ENCODE measurements at regions of chr13 and their contacts with region 1.

Region 1: GRCh38 chr13:75870397-75870903 is 234.3 kb downstream of the LMO7 start:
- DNase-seq: no peak
- H3K4me3 ChIP-seq: peak overlapping the region; percentile 33 to 37 (median 35)
- H3K27ac ChIP-seq: peak overlapping the region in 1 of 4 donors; percentile 17
- H3K4me1 ChIP-seq: peaks cover 0 to 11% (median 9%) of the 10 kb centered on the region in 4 donors
- H3K27me3 ChIP-seq: no peaks in the 10 kb centered on the region
- CTCF ChIP-seq: peak; percentile 74 to 84 (median 83)
- EP300 ChIP-seq: no peak
- POLR2A ChIP-seq: no peak

Region 2: GRCh38 chr13:76473552-76474134 is 603.2 kb after region 1 on chr13:
- intact Hi-C with region 1: loop called (anchors 2 kb)
- DNase-seq: no peak
- H3K4me3 ChIP-seq: no peak overlapping the region
- H3K27ac ChIP-seq: no peak overlapping the region
- H3K4me1 ChIP-seq: peaks cover 4 to 20% (median 15%) of the 10 kb centered on the region in 4 donors
- H3K27me3 ChIP-seq: no peaks in the 10 kb centered on the region
- CTCF ChIP-seq: peak; percentile 81 to 90 (median 84)
- EP300 ChIP-seq: no peak
- POLR2A ChIP-seq: no peak

Region 3: GRCh38 chr13:76886292-76887075 is 1016.0 kb after region 1 on chr13 and contains the start of gene KCTD12:
- intact Hi-C with region 1: loop called (anchors 5 kb)
- DNase-seq: peak; percentile 98
- H3K4me3 ChIP-seq: peak within 1 kb of the TSS; percentile 83 to 95 (median 89)
- H3K27ac ChIP-seq: peak within 1 kb of the TSS; percentile 90 to 97 (median 94)
- H3K4me1 ChIP-seq: peaks cover 5 to 47% (median 41%) of the 10 kb centered on the region in 4 donors
- H3K27me3 ChIP-seq: no peaks in the 10 kb centered on the region
- CTCF ChIP-seq: peak; percentile 33 to 45 (median 41)
- EP300 ChIP-seq: no peak
- POLR2A ChIP-seq: peak; percentile 54
- total RNA-seq, gene KCTD12: 112 to 169 (median 148) TPM

Region 4: DNA sequence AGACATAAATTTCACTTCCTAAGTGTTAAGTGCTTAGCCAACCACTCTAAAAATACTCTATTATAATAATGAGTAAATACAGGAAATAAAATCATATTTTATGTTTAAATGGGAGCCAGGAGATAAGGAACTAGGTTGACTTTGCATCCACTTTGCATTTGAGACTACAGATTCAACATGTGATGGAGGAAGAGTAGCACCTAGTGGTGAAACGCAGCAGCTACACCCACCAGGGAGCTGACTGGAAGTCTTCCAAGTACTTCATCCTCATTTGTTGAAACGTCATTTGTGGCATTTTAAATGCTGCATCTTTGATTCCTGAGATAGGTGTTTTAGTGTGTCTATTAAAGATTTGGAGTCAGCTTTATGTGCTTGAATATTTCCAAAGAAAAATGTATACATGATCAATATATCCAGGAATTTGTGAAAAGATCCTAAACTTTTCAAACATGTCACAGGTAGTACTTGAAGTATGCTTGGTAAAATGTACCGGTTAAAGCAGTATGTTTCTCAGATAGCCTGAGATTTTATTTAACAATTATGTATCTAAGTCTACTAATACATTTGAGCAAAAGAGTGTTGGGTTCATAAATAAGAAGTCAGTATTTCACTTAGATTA is 1033.2 kb after region 1 on chr13:
- intact Hi-C with region 1: loop called (anchors 5 kb)
- DNase-seq: no peak
- H3K4me3 ChIP-seq: no peak overlapping the region
- H3K27ac ChIP-seq: no peak overlapping the region
- H3K4me1 ChIP-seq: peaks cover 0 to 6% (median 0%) of the 10 kb centered on the region in 4 donors
- H3K27me3 ChIP-seq: no peaks in the 10 kb centered on the region
- CTCF ChIP-seq: peak; percentile 96 to 99 (median 96)
- EP300 ChIP-seq: no peak
- POLR2A ChIP-seq: no peak

Region 5: DNA sequence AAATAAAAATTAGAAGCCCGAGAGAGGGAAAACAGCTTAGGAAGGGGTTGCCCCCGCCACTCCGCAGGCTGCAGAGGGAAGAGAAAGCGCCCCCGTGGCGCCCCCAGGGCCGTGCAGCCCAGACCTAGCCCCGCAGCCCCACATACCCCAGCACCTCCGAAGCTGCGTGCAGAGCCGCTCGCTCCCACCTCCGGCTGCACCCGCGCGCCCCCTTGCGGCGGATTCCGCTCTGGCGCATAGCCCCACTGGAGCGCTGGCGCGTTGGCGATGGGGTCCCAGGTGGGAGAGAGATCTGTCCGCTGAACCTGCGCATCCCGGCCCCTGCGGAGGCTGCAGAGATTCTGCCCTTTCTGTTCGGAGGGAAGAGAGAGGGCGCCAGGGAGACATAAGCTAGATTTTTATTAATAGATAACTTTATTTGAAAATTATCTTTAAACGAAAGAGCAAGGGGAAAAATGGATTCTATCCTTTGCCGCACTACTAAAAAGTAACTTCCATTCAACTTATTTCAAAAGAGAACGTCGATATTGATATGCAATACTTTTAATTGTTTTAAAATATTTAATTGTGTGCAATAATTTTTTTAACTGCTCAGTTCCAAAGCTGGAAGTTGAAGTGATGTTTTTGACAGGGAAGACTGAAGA is 1109.7 kb after region 1 on chr13:
- intact Hi-C with region 1: loop called (anchors 5 kb)
- DNase-seq: no peak
- H3K4me3 ChIP-seq: peak overlapping the region; percentile 32 to 50 (median 36)
- H3K27ac ChIP-seq: no peak overlapping the region
- H3K4me1 ChIP-seq: peaks cover 10 to 22% (median 14%) of the 10 kb centered on the region in 4 donors
- H3K27me3 ChIP-seq: no peaks in the 10 kb centered on the region
- CTCF ChIP-seq: peak; percentile 77 to 99 (median 91)
- EP300 ChIP-seq: no peak
- POLR2A ChIP-seq: no peak

Measured in esophagus muscularis mucosa (tissue), 4 donors.